CD8-positive, alpha-beta memory T cell (primary cell): ENCODE measurements at regions of chr19 and their contacts with region 1.

Region 1: DNA sequence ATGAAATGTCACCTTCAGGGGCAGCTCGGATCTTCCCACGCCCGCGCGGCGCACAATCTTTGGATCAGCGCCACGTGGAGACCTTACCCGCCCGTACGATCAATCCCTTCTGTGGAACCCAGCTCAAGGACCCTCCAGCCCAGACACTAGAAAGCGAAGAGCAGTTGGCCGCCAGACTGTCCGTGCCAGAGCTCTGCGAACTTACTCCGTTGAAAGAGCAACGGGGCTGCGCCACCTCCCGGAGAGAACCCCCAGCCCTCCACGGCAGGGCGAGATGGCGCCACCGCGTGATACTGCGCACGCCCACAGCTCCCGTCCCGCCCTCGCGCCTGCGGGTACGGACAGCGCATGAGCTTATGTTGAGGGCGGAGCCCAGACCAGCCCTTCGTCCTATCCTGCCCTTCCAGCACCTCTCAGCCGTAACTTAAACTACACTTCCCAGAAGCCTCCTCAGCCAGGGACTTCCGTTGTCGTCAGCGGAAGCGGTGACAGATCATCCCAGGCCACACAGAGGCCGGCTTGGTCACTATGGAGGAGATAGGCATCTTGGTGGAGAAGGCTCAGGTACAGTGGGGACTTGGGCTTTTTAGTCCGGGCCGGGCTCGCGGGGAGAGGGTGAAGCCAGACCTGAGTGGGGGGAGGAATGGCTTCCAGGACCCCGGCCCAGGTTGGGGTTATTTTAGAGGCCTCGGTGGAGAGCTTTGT is at the start of gene PSMC4:
- DNase-seq: peak; percentile 97 to 99 (median 98)
- H3K4me3 ChIP-seq: peak within 1 kb of the TSS; percentile 84
- H3K4me3 Mint-ChIP-seq: peak within 1 kb of the TSS; percentile 91 to 99 (median 95)
- H3K27ac ChIP-seq: peak within 1 kb of the TSS; percentile 96
- H3K27ac Mint-ChIP-seq: peak within 1 kb of the TSS; percentile 93 to 100 (median 98)
- H3K4me1 ChIP-seq: peaks cover 32% of the 10 kb centered on the region
- H3K4me1 Mint-ChIP-seq: peaks cover 47 to 68% (median 51%) of the 10 kb centered on the region in 3 donors
- H3K27me3 ChIP-seq: no peaks in the 10 kb centered on the region
- H3K27me3 Mint-ChIP-seq: no peaks in the 10 kb centered on the region
- total RNA-seq, gene PSMC4: 170 to 179 TPM

Region 2: GRCh38 chr19:39792999-39793546 is 177.8 kb before region 1 on chr19:
- CTCF ChIA-PET with region 1: interaction called, 23 read pairs
- POLR2A ChIA-PET with region 1: no interaction called
- DNase-seq: peak; percentile 59 to 79 (median 63)
- H3K4me3 ChIP-seq: peak overlapping the region; percentile 68
- H3K4me3 Mint-ChIP-seq: peak overlapping the region; percentile 66 to 91 (median 81)
- H3K27ac ChIP-seq: no peak overlapping the region
- H3K27ac Mint-ChIP-seq: peak overlapping the region in 3 of 8 donors; percentile 6 to 64 (median 61)
- H3K4me1 ChIP-seq: no peaks in the 10 kb centered on the region
- H3K4me1 Mint-ChIP-seq: peaks cover 0 to 7% (median 3%) of the 10 kb centered on the region in 3 donors
- H3K27me3 ChIP-seq: no peaks in the 10 kb centered on the region
- H3K27me3 Mint-ChIP-seq: peaks cover 3 to 5% of the 10 kb centered on the region in 2 donors

Region 3: GRCh38 chr19:39846176-39846677 is 124.6 kb before region 1 on chr19 and contains the start of gene FBL:
- CTCF ChIA-PET with region 1: interaction called, 45 read pairs
- POLR2A ChIA-PET with region 1: interaction called, 10 read pairs
- DNase-seq: peak; percentile 94 to 98 (median 98)
- H3K4me3 ChIP-seq: peak within 1 kb of the TSS; percentile 74
- H3K4me3 Mint-ChIP-seq: peak within 1 kb of the TSS; percentile 79 to 94 (median 90)
- H3K27ac ChIP-seq: peak within 1 kb of the TSS; percentile 81
- H3K27ac Mint-ChIP-seq: peak within 1 kb of the TSS; percentile 93 to 99 (median 96)
- H3K4me1 ChIP-seq: peaks cover 48% of the 10 kb centered on the region
- H3K4me1 Mint-ChIP-seq: peaks cover 45 to 57% (median 52%) of the 10 kb centered on the region in 3 donors
- H3K27me3 ChIP-seq: no peaks in the 10 kb centered on the region
- H3K27me3 Mint-ChIP-seq: no peaks in the 10 kb centered on the region
- total RNA-seq, gene FBL: 661 to 682 TPM

Region 4: GRCh38 chr19:39906820-39907611 is 63.8 kb before region 1 on chr19:
- CTCF ChIA-PET with region 1: interaction called, 25 read pairs
- POLR2A ChIA-PET with region 1: interaction called, 5 read pairs
- DNase-seq: no peak
- H3K4me3 ChIP-seq: no peak overlapping the region
- H3K4me3 Mint-ChIP-seq: no peak overlapping the region
- H3K27ac ChIP-seq: no peak overlapping the region
- H3K27ac Mint-ChIP-seq: peak overlapping the region in 3 of 8 donors; percentile 4 to 62 (median 53)
- H3K4me1 ChIP-seq: no peaks in the 10 kb centered on the region
- H3K4me1 Mint-ChIP-seq: peaks cover 6 to 18% (median 11%) of the 10 kb centered on the region in 3 donors
- H3K27me3 ChIP-seq: no peaks in the 10 kb centered on the region
- H3K27me3 Mint-ChIP-seq: no peaks in the 10 kb centered on the region

Region 5: DNA sequence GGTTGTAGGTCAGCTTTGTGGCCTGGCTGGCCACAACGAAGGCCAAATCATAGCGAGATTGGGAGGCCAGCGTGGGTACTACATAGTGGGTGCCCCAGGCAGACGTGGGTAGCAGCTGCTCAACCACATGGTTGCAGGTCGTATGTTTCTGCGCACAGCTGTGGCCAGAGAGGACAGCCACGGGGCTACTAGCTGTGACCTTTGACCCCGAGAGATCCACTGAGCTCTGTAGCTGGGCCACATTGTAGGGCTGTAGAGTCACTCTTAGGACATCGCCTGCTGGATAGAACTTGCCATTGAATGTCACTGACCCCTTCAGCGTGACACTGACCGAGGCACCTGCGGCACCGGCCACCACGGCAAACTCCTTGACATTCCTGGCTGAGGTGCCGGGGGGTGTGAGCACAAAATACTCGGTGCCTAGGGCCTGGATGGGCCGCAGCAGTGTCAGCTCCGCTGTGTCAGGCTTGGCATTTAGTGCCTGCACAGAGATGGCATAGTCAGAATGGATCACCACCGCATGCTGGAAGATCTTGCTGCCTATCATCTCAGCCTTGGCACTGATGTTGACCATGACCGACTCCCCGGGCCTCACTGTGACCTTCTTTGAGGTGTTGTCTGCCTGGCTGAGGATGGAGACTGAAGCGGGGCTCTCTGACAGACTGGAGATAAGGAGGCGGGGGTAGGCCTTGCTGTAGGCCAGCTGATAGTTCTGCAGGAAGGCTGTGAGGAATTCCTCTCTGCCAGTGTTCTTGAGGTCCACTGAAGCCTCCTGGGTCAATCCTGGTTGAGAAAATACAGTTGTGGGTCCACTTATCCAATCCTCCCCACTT is 43.1 kb before region 1 on chr19:
- CTCF ChIA-PET with region 1: interaction called, 16 read pairs
- POLR2A ChIA-PET with region 1: interaction called, 3 read pairs
- DNase-seq: no peak
- H3K4me3 ChIP-seq: no peak overlapping the region
- H3K4me3 Mint-ChIP-seq: no peak overlapping the region
- H3K27ac ChIP-seq: no peak overlapping the region
- H3K27ac Mint-ChIP-seq: no peak overlapping the region
- H3K4me1 ChIP-seq: peaks cover 8% of the 10 kb centered on the region
- H3K4me1 Mint-ChIP-seq: peaks cover 8 to 26% (median 11%) of the 10 kb centered on the region in 3 donors
- H3K27me3 ChIP-seq: no peaks in the 10 kb centered on the region
- H3K27me3 Mint-ChIP-seq: no peaks in the 10 kb centered on the region

Region 6: GRCh38 chr19:39941615-39942365 is 29.0 kb before region 1 on chr19:
- CTCF ChIA-PET with region 1: interaction called, 79 read pairs
- POLR2A ChIA-PET with region 1: interaction called, 28 read pairs
- DNase-seq: peak; percentile 30 to 84 (median 80)
- H3K4me3 ChIP-seq: peak overlapping the region; percentile 38
- H3K4me3 Mint-ChIP-seq: peak overlapping the region; percentile 65 to 83 (median 72)
- H3K27ac ChIP-seq: peak overlapping the region; percentile 40
- H3K27ac Mint-ChIP-seq: peak overlapping the region; percentile 69 to 99 (median 93)
- H3K4me1 ChIP-seq: peaks cover 63% of the 10 kb centered on the region
- H3K4me1 Mint-ChIP-seq: peaks cover 66 to 84% (median 80%) of the 10 kb centered on the region in 3 donors
- H3K27me3 ChIP-seq: no peaks in the 10 kb centered on the region
- H3K27me3 Mint-ChIP-seq: no peaks in the 10 kb centered on the region

Region 7: DNA sequence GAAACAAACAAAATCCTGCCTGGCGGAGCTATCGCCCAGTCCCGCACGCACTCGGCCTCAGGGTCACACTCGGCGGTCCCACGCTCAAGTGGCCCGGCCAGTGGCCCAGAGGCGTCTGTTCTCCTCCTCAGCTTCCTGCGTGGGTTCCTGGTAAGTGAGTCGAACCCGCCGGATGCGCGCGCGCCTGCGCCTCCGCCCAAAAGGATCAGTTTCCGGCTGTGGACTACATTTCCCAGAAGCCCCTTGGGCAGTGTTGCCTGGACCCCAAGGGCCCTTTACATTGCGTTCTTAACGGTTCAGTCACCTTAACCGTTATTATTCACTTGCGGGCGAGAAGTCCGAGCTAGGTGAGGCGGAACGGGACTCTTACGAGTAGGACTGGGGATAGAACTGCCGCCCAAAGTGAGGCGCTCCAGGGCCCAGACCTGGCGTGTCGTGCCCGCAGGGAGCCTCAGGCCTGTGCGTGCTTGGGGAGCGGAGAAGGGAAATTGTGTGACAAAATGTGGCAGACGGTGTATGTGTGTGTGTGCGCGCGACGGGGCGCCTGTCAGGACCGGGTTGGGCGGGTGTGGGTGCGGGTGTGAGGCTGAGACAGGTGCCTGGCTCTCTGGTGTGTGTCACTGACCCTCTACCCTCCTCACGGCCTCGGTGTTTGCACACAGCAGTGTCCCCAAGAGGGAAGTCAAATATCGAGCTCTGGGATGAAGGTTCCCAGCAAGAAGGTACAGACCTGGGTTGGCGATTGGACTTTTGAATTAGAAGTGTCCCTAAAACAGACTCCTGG is 26.2 kb after region 1 on chr19 and contains the start of gene ZNF546:
- CTCF ChIA-PET with region 1: interaction called, 25 read pairs
- POLR2A ChIA-PET with region 1: interaction called, 20 read pairs
- DNase-seq: peak; percentile 79 to 93 (median 89)
- H3K4me3 ChIP-seq: peak within 1 kb of the TSS; percentile 99
- H3K4me3 Mint-ChIP-seq: peak within 1 kb of the TSS; percentile 91 to 99 (median 95)
- H3K27ac ChIP-seq: peak within 1 kb of the TSS; percentile 93
- H3K27ac Mint-ChIP-seq: peak within 1 kb of the TSS; percentile 85 to 99 (median 98)
- H3K4me1 ChIP-seq: peaks cover 19% of the 10 kb centered on the region
- H3K4me1 Mint-ChIP-seq: peaks cover 30 to 52% (median 51%) of the 10 kb centered on the region in 3 donors
- H3K27me3 ChIP-seq: no peaks in the 10 kb centered on the region
- H3K27me3 Mint-ChIP-seq: no peaks in the 10 kb centered on the region
- total RNA-seq, gene ZNF546: 4.8 to 5.0 TPM